ENCODE measurements at regions of chr2 and their contacts with region 1.

Region 1: GRCh38 chr2:197310271-197310985 is at the start of gene ANKRD44:
- DNase-seq: peak; percentile 85 to 95 (median 92)
- H3K4me3 ChIP-seq: peak within 1 kb of the TSS; percentile 85
- H3K4me3 Mint-ChIP-seq: peak within 1 kb of the TSS; percentile 89 to 98 (median 96)
- H3K27ac ChIP-seq: peak within 1 kb of the TSS; percentile 79
- H3K27ac Mint-ChIP-seq: peak within 1 kb of the TSS; percentile 95 to 99 (median 96)
- H3K4me1 ChIP-seq: peaks cover 51% of the 10 kb centered on the region
- H3K4me1 Mint-ChIP-seq: peaks cover 57 to 74% (median 68%) of the 10 kb centered on the region in 3 donors
- H3K27me3 ChIP-seq: no peaks in the 10 kb centered on the region
- H3K27me3 Mint-ChIP-seq: no peaks in the 10 kb centered on the region
- total RNA-seq, gene ANKRD44: 142 to 150 TPM

Region 2: GRCh38 chr2:197191177-197191939 is 119.1 kb before region 1 on chr2:
- CTCF ChIA-PET with region 1: interaction called, 80 read pairs
- POLR2A ChIA-PET with region 1: interaction called, 68 read pairs
- DNase-seq: peak in 2 of 5 donors; percentile 64 to 69
- H3K4me3 ChIP-seq: peak overlapping the region; percentile 4
- H3K4me3 Mint-ChIP-seq: peak overlapping the region in 6 of 7 donors; percentile 41 to 78 (median 56)
- H3K27ac ChIP-seq: peak overlapping the region; percentile 45
- H3K27ac Mint-ChIP-seq: peak overlapping the region; percentile 72 to 99 (median 88)
- H3K4me1 ChIP-seq: peaks cover 87% of the 10 kb centered on the region
- H3K4me1 Mint-ChIP-seq: peaks cover 73 to 92% (median 91%) of the 10 kb centered on the region in 3 donors
- H3K27me3 ChIP-seq: no peaks in the 10 kb centered on the region
- H3K27me3 Mint-ChIP-seq: no peaks in the 10 kb centered on the region

Region 3: GRCh38 chr2:197209742-197210408 is 100.6 kb before region 1 on chr2:
- CTCF ChIA-PET with region 1: interaction called, 42 read pairs
- POLR2A ChIA-PET with region 1: interaction called, 10 read pairs
- DNase-seq: peak; percentile 34 to 64 (median 36)
- H3K4me3 ChIP-seq: peak overlapping the region; percentile 21
- H3K4me3 Mint-ChIP-seq: peak overlapping the region; percentile 36 to 89 (median 74)
- H3K27ac ChIP-seq: peak overlapping the region; percentile 26
- H3K27ac Mint-ChIP-seq: peak overlapping the region; percentile 92 to 100 (median 96)
- H3K4me1 ChIP-seq: peaks cover 99% of the 10 kb centered on the region
- H3K4me1 Mint-ChIP-seq: peaks cover 97 to 99% (median 98%) of the 10 kb centered on the region in 3 donors
- H3K27me3 ChIP-seq: no peaks in the 10 kb centered on the region
- H3K27me3 Mint-ChIP-seq: no peaks in the 10 kb centered on the region

Region 4: GRCh38 chr2:197255543-197255942 is 54.9 kb before region 1 on chr2:
- CTCF ChIA-PET with region 1: interaction called, 10 read pairs
- POLR2A ChIA-PET with region 1: interaction called, 8 read pairs
- DNase-seq: peak; percentile 62 to 85 (median 71)
- H3K4me3 ChIP-seq: peak overlapping the region; percentile 49
- H3K4me3 Mint-ChIP-seq: peak overlapping the region; percentile 67 to 83 (median 78)
- H3K27ac ChIP-seq: peak overlapping the region; percentile 60
- H3K27ac Mint-ChIP-seq: peak overlapping the region; percentile 89 to 99 (median 96)
- H3K4me1 ChIP-seq: peaks cover 78% of the 10 kb centered on the region
- H3K4me1 Mint-ChIP-seq: peaks cover 72 to 91% (median 88%) of the 10 kb centered on the region in 3 donors
- H3K27me3 ChIP-seq: no peaks in the 10 kb centered on the region
- H3K27me3 Mint-ChIP-seq: no peaks in the 10 kb centered on the region

Region 5: DNA sequence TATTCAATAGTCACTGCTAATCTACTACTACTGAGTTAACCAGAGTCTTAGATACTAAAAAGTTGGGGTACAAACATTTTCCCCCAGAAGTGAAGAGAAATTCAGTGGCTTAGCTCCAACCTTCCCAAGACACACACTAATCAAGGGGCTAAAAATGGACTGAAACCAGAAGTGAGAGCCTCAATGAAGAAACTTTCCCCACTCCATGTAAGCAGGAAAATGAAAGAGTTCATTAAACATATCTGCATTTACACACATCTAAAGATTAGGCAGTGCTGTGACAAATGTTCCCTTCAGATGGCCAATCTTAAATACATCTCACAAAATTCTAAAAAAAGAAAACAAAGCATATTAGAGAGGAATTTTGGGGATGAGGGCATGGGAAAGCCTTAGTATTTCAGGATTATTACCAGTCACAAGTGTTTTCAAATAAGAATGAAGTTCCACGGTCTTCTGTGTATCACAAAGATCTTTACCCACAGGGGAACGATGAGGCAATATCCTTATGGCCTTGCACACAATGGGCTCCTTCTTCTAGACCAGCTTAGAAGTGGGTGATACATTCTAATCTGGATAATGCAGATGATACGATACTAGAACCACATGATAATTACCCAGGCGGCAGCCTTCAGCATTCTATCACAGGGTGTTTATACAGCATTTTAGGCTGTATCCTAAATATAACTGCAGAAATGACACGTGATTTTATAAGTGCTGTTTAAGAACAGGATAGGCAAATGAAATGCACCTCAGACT is 17.0 kb before region 1 on chr2:
- CTCF ChIA-PET with region 1: interaction called, 17 read pairs
- POLR2A ChIA-PET with region 1: interaction called, 20 read pairs
- DNase-seq: peak in 3 of 5 donors; percentile 10 to 56 (median 50)
- H3K4me3 ChIP-seq: peak overlapping the region; percentile 13
- H3K4me3 Mint-ChIP-seq: peak overlapping the region; percentile 60 to 92 (median 85)
- H3K27ac ChIP-seq: peak overlapping the region; percentile 15
- H3K27ac Mint-ChIP-seq: peak overlapping the region; percentile 92 to 99 (median 97)
- H3K4me1 ChIP-seq: peaks cover 94% of the 10 kb centered on the region
- H3K4me1 Mint-ChIP-seq: peaks cover 93 to 97% (median 94%) of the 10 kb centered on the region in 3 donors
- H3K27me3 ChIP-seq: no peaks in the 10 kb centered on the region
- H3K27me3 Mint-ChIP-seq: no peaks in the 10 kb centered on the region

Region 6: DNA sequence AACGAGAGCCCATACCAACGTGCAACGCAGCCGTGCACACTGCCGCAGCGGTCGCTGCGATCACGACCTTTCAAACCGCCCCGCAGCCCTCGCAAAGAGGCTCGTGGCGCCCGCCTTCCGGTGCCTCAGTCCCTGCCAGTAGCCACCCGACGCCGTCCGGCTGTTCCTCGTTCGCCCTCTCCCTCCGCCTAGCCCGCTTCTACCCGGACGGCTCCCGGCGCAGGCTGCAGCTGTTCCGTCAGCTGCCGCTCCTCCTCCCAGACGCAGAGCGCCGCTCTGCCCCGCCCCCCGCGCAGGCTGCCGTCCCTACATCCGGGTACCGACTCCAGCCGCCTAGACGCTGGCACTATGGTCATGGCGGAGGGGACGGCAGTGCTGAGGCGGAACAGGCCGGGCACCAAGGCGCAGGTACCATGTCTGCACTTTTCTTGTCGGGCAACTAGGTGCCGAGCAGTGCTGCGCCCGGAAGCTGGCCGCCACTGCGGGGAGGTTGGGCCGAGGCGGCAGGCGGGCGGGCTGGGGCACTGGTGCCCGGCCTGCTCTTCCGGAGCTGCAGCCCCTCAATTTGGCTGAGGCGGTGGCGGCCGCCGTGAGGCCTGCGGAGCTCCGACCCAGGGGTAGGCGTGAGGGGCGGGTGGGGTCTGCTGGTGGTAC is 205.4 kb after region 1 on chr2 and contains the start of gene MOB4:
- CTCF ChIA-PET with region 1: no interaction called
- POLR2A ChIA-PET with region 1: no interaction called
- DNase-seq: peak; percentile 92 to 96 (median 93)
- H3K4me3 ChIP-seq: peak within 1 kb of the TSS; percentile 91
- H3K4me3 Mint-ChIP-seq: peak within 1 kb of the TSS; percentile 88 to 99 (median 97)
- H3K27ac ChIP-seq: peak within 1 kb of the TSS; percentile 94
- H3K27ac Mint-ChIP-seq: peak within 1 kb of the TSS; percentile 90 to 97 (median 96)
- H3K4me1 ChIP-seq: peaks cover 25% of the 10 kb centered on the region
- H3K4me1 Mint-ChIP-seq: peaks cover 36 to 53% (median 44%) of the 10 kb centered on the region in 3 donors
- H3K27me3 ChIP-seq: no peaks in the 10 kb centered on the region
- H3K27me3 Mint-ChIP-seq: no peaks in the 10 kb centered on the region
- total RNA-seq, gene MOB4: 21.9 to 26.2 TPM

Measured in CD8-positive, alpha-beta memory T cell (primary cell).